Prostate gland (tissue), 2 donors: ENCODE measurements at regions of chr19 and their contacts with region 1.

Region 1: GRCh38 chr19:18408053-18408476 is 10.6 kb upstream of the LRRC25 start:
- DNase-seq: no peak
- H3K4me3 ChIP-seq: no peak overlapping the region
- H3K27ac ChIP-seq: no peak overlapping the region
- H3K4me1 ChIP-seq: no peaks in the 10 kb centered on the region
- H3K27me3 ChIP-seq: no peaks in the 10 kb centered on the region
- CTCF ChIP-seq: peak in 3 of 4 experiments; percentile 20 to 55 (median 39)
- POLR2A ChIP-seq: no peak

Region 2: GRCh38 chr19:18349524-18350128 is 58.4 kb before region 1 on chr19:
- intact Hi-C with region 1: loop called (anchors 2 kb)
- DNase-seq: peak; percentile 42
- H3K4me3 ChIP-seq: no peak overlapping the region
- H3K27ac ChIP-seq: no peak overlapping the region
- H3K4me1 ChIP-seq: no peaks in the 10 kb centered on the region
- H3K27me3 ChIP-seq: no peaks in the 10 kb centered on the region
- CTCF ChIP-seq: peak in 3 of 4 experiments; percentile 74 to 92 (median 85)
- POLR2A ChIP-seq: no peak

Region 3: DNA sequence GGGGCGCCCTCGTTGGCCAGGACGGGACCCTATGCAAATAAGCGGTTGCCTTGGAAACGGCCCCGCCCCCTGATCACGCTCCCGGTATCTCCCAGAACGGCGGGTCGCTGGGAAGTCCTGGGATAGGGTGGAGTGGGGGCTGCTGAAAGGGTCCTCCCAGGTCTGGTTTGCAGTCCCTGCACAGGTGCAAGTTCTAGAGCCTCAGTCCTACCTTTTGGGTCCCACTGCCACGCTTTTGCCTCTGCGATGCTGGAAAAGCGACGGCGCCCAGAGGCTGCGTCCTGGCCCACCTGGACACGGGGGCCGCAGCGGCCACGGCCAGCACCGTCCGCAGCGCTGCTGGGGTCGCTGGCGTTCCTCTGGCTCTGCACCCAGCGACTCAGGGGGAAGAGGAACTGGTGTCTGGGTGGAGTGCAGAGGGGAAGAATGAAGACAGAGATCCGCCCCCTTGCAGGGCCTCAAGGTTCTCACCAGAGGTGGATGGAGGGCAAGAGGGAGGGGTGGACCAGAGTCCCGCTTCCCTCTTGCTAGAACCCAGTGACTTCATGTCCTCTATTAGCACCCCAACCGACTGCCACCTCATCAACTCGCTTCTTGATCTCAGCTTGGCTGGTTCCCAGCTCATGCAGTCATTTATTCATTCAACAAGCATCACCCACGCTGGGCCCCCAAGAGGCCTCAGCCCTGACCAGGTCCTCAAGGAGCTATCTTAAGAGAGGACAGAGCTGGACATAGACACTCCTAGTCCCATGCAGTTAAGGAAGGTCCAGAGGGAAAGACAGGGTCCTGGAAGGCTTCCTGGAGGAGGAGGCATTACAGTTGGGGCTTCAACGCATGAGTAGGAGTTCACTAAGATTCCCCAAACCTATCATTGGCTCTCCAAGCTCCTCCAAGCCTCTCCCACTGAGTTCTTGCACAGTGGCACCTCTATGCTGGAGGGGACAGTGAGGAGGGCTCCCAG is 10.5 kb before region 1 on chr19 and contains the start of gene LRRC25:
- intact Hi-C with region 1: no loop called
- DNase-seq: no peak
- H3K4me3 ChIP-seq: no peak within 1 kb of the TSS
- H3K27ac ChIP-seq: peak within 1 kb of the TSS in 1 of 2 donors; percentile 20
- H3K4me1 ChIP-seq: peaks cover 4% of the 10 kb centered on the region
- H3K27me3 ChIP-seq: no peaks in the 10 kb centered on the region
- CTCF ChIP-seq: no peak
- POLR2A ChIP-seq: peak; percentile 24
- total RNA-seq, gene LRRC25: 1.6 to 5.5 TPM

Region 4: DNA sequence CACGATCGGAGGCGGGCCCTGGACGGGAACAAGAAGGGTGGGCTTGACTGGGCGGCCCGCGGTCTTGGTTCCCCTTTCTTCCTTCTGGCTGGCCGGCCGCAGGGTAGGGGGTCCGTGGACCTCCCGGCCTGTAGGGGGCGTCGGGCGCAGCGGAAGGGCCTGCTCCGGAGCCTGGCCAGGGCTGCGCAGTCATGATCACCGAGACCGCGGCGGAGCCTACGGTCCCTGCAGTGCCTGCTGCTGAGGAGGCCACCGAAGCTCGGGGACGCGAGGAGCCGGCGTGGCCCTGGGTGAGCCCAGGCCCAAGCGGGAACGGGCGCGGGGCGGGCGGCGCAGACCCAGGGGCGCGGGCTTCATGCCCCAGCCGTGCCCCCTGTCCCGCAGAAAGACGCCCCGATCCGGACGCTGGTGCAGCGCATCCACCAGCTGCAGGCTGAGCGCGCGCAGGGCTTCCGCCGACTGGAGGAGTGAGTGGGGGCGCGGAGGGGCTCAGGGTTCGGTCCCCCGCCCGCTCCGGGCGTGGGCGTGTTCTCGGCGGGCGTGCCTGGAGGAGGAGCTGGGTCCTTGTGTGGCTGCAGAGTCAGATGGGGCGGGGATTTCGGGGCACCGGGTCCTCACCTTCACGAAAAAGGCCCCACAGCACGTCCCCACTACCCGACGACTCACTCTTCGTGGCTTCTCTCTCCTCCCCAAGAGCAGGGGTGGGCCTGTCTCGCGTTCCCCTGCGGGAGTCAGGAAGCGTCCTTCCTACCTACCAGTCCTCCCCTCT is 180.7 kb after region 1 on chr19 and contains the start of gene REX1BD:
- intact Hi-C with region 1: no loop called
- DNase-seq: peak; percentile 58
- H3K4me3 ChIP-seq: peak within 1 kb of the TSS; percentile 66 to 84
- H3K27ac ChIP-seq: peak within 1 kb of the TSS; percentile 78 to 79
- H3K4me1 ChIP-seq: peaks cover 5% of the 10 kb centered on the region
- H3K27me3 ChIP-seq: no peaks in the 10 kb centered on the region
- CTCF ChIP-seq: peak; percentile 53 to 87 (median 82)
- POLR2A ChIP-seq: peak; percentile 31
- total RNA-seq, gene REX1BD: 98.9 to 149 TPM